Activated CD8-positive, alpha-beta memory T cell treated with anti-CD3 and anti-CD28 coated beads, Interleukin-2, amount 10 ng/mL, durations not matched to agents 7 days and 5 days (primary cell): ENCODE measurements at regions of chr5 and their contacts with region 1.

Region 1: GRCh38 chr5:153974131-153974812 is 64.4 kb downstream of the FAM114A2 start:
- DNase-seq: peak; percentile 54
- ATAC-seq: peak; percentile 64
- H3K4me3 Mint-ChIP-seq: no peak overlapping the region
- H3K27ac Mint-ChIP-seq: no peak overlapping the region
- H3K4me1 Mint-ChIP-seq: no peaks in the 10 kb centered on the region
- H3K27me3 Mint-ChIP-seq: peaks cover 14% of the 10 kb centered on the region

Region 2: GRCh38 chr5:153937661-153938060 is 36.6 kb before region 1 on chr5:
- CTCF ChIA-PET with region 1: no interaction called
- DNase-seq: no peak
- ATAC-seq: no peak
- H3K4me3 Mint-ChIP-seq: no peak overlapping the region
- H3K27ac Mint-ChIP-seq: no peak overlapping the region
- H3K4me1 Mint-ChIP-seq: no peaks in the 10 kb centered on the region
- H3K27me3 Mint-ChIP-seq: no peaks in the 10 kb centered on the region

Region 3: GRCh38 chr5:153987306-153987705 is 13.0 kb after region 1 on chr5:
- CTCF ChIA-PET with region 1: interaction called, 12 read pairs
- DNase-seq: no peak
- ATAC-seq: no peak
- H3K4me3 Mint-ChIP-seq: no peak overlapping the region
- H3K27ac Mint-ChIP-seq: no peak overlapping the region
- H3K4me1 Mint-ChIP-seq: no peaks in the 10 kb centered on the region
- H3K27me3 Mint-ChIP-seq: no peaks in the 10 kb centered on the region

Region 4: GRCh38 chr5:154179846-154180710 is 205.8 kb after region 1 on chr5:
- CTCF ChIA-PET with region 1: interaction called, 21 read pairs
- DNase-seq: peak; percentile 57
- ATAC-seq: peak; percentile 91
- H3K4me3 Mint-ChIP-seq: no peak overlapping the region
- H3K27ac Mint-ChIP-seq: no peak overlapping the region
- H3K4me1 Mint-ChIP-seq: peaks cover 15% of the 10 kb centered on the region
- H3K27me3 Mint-ChIP-seq: peaks cover 8% of the 10 kb centered on the region

Region 5: GRCh38 chr5:154189819-154190594 is 215.7 kb after region 1 on chr5:
- CTCF ChIA-PET with region 1: interaction called, 13 read pairs
- DNase-seq: peak; percentile 86
- ATAC-seq: peak; percentile 84
- H3K4me3 Mint-ChIP-seq: peak overlapping the region; percentile 81
- H3K27ac Mint-ChIP-seq: peak overlapping the region; percentile 68
- H3K4me1 Mint-ChIP-seq: peaks cover 31% of the 10 kb centered on the region
- H3K27me3 Mint-ChIP-seq: peaks cover 3% of the 10 kb centered on the region